ENCODE measurements at regions of chr2 and their contacts with region 1.

Region 1: DNA sequence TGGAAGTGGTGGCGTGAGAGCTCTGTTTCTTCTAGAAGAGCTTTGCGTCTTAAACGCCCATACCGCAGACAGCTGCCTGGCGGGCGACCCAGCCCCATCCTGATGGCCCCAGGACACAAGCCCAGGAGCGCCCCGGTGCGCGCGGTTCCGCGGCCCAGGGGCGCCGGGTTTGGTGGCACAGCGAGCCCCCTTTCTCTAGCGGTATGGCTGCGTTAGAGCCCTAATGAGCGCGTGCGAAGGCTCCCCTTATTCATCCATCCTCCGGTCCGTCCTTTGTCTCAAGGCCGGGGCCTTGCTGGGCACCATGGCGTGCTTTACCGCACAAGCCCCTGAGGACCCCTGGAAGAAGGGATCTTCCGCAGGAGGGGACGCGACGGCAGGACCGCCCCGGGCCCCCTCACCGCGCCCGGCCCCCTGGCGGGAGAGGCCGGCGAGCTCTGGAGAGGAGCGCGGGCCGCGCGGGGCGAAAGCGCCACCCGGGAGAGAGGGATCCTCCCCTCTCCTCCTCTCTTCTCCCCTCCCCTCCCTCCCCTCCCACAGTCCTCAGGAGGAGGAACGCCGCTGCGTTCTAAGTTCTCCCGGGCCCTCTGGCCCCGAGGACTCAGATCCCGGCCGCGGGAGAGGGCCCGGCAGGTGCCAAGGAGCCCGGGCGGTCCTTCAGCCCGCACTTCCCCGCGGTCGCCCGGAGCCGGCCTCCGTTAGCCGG is 626 bp upstream of the SLC1A4 start:
- DNase-seq: peak; percentile 93
- H3K4me3 Mint-ChIP-seq: peak overlapping the region; percentile 77
- H3K27ac Mint-ChIP-seq: peak overlapping the region; percentile 74
- H3K4me1 Mint-ChIP-seq: peaks cover 54% of the 10 kb centered on the region
- H3K27me3 Mint-ChIP-seq: peaks cover 16% of the 10 kb centered on the region

Region 2: GRCh38 chr2:63888490-63889402 is 1099.8 kb before region 1 on chr2:
- intact Hi-C with region 1: no loop called
- DNase-seq: peak; percentile 82
- H3K4me3 Mint-ChIP-seq: no peak overlapping the region
- H3K27ac Mint-ChIP-seq: peak overlapping the region; percentile 31
- H3K4me1 Mint-ChIP-seq: peaks cover 7% of the 10 kb centered on the region
- H3K27me3 Mint-ChIP-seq: no peaks in the 10 kb centered on the region

Region 3: GRCh38 chr2:64036034-64036705 is 952.4 kb before region 1 on chr2:
- intact Hi-C with region 1: loop called (anchors 10 kb)
- DNase-seq: peak; percentile 82
- H3K4me3 Mint-ChIP-seq: peak overlapping the region; percentile 22
- H3K27ac Mint-ChIP-seq: peak overlapping the region; percentile 76
- H3K4me1 Mint-ChIP-seq: peaks cover 42% of the 10 kb centered on the region
- H3K27me3 Mint-ChIP-seq: no peaks in the 10 kb centered on the region

Region 4: GRCh38 chr2:64609227-64609941 is 379.2 kb before region 1 on chr2:
- intact Hi-C with region 1: loop called (anchors 5 kb)
- DNase-seq: peak; percentile 93
- H3K4me3 Mint-ChIP-seq: peak overlapping the region; percentile 76
- H3K27ac Mint-ChIP-seq: peak overlapping the region; percentile 74
- H3K4me1 Mint-ChIP-seq: peaks cover 24% of the 10 kb centered on the region
- H3K27me3 Mint-ChIP-seq: peaks cover 20% of the 10 kb centered on the region

Region 5: DNA sequence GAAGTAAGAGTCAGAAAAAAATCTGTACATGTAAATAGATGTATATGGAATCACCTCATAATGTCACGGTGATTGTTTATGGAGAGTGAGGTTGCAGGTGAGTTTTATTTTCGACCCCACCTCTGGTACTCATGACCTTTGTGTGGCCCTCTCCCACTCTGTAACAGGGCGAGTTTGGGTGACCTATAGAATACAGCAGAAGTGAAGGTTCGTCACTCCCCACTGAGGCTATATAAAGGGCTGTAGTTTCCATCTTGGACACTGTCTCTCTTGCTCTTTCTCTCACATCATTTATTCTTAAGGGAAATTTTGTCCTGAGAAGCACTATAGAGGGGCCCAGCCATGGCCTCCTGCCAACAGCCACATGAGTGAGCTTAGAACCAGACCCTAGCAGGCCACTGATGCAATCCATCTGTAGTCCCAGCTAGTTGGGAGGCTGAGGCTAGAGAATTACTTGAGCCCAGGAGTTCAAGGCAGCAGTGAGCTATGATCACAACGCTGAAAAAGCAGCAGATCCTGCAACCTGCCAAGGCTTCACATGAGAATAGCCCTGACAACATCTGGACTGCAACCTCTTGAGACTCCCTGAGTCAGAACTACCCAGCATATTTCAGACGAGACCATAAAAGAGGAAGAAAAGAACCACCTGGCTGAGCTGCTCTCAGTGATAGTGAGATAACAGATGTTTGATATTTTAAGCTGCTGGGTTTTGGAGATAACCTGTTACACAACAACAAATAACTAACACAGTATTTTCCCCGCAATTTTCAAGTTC is 73.7 kb before region 1 on chr2:
- intact Hi-C with region 1: loop called (anchors 1 kb)
- DNase-seq: no peak
- H3K4me3 Mint-ChIP-seq: no peak overlapping the region
- H3K27ac Mint-ChIP-seq: no peak overlapping the region
- H3K4me1 Mint-ChIP-seq: peaks cover 35% of the 10 kb centered on the region
- H3K27me3 Mint-ChIP-seq: no peaks in the 10 kb centered on the region

Region 6: GRCh38 chr2:65031341-65032018 is 42.9 kb after region 1 on chr2:
- intact Hi-C with region 1: no loop called
- DNase-seq: no peak
- H3K4me3 Mint-ChIP-seq: peak overlapping the region; percentile 2
- H3K27ac Mint-ChIP-seq: peak overlapping the region; percentile 50
- H3K4me1 Mint-ChIP-seq: peaks cover 19% of the 10 kb centered on the region
- H3K27me3 Mint-ChIP-seq: no peaks in the 10 kb centered on the region

Region 7: DNA sequence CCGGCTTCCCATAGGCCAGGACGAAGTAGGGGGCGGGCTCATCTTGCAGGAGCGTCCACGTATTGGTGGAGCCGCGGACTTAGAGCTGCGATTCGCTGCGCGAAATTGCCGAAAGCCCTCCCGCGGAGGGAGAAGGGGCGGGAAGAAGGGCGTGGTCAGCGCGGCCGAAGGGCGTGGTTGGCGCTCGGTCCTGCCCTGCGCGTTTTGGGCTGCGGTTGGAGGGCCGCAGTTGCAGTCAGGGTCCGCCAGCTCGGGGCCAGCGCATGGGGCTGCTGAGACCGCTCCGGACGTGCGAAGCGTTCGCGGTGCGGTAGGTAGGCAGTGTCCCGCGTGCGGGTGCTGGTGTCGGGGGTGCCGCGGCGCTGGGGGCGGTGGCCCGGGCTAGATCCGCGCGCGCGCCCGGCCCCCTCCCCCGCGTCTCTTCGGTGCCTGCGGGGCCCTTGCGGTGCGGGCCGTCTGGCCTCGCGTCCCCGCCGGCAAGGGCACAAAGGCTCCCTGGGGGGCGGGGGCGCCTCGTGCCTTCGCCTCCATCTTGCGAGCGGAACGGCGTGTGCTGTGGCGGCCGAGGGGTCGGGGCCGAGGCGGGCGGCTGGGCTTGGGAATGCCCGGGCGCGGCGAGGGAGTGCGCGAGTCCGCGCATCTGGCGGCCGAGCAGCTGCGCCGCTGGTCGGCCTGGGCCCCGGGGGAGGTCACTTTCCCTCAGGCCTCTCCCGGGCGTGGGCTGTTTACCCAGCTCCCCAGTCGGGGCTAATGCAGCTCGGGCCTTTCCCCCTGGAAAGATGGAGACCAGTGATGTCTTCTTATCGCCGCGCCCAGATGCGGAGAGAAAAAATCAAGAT is 67.9 kb after region 1 on chr2 and contains the start of gene CEP68:
- intact Hi-C with region 1: loop called (anchors 1 kb)
- DNase-seq: peak; percentile 99
- H3K4me3 Mint-ChIP-seq: peak within 1 kb of the TSS; percentile 97
- H3K27ac Mint-ChIP-seq: peak within 1 kb of the TSS; percentile 87
- H3K4me1 Mint-ChIP-seq: peaks cover 50% of the 10 kb centered on the region
- H3K27me3 Mint-ChIP-seq: peaks cover 2% of the 10 kb centered on the region
- total RNA-seq, gene CEP68: 4.4 and 4.9 TPM in 2 replicates

Region 8: DNA sequence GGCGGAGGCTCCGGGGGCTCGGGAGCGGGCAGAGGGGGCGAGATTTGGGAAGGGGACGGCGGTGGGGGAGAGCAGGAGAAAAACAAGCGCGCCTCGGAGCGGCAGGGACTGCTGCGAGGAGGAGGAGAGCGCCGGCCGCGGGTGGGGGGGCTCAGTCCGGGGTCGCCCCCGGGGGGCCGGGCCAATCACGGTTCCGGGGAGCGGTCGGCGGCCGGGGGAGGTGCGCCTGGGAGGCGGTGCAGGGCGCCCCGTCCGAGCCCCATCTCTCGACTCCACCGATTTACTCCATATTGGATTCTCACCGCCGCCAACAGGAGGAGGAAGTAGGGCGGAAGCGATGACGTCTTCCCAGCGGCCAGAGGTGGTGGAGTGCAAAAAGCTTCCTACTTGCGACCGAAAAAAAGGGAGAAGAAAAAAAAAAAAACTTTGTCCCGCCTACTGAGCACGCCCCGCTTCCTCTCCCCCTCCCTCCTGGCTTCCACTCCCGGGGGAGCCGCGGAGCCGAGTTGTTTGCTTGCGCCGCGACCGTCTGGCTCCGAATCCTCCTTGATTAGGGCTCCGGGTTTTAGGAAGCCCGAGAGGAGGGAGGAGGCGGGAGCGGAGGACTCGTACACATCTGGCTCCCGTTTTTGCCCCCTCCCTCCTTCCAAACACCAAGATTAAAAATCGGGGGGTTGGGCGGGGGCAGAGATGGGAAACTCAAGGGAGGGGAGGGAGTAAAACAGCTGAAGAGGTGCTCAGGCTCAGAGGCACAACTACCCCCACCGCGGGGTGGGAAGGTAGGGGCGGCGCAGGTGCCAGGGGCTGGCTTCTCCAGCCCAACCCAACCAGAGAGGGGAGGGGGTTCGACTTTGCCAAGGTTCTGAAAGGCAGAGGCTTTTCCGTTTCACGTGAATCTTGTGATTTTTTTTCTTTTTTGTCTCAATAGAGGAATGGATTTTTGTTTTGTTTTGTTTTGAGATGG is 443.9 kb after region 1 on chr2 and contains the start of gene SPRED2:
- intact Hi-C with region 1: loop called (anchors 5 kb)
- DNase-seq: peak; percentile 93
- H3K4me3 Mint-ChIP-seq: peak within 1 kb of the TSS; percentile 97
- H3K27ac Mint-ChIP-seq: peak within 1 kb of the TSS; percentile 89
- H3K4me1 Mint-ChIP-seq: peaks cover 31% of the 10 kb centered on the region
- H3K27me3 Mint-ChIP-seq: peaks cover 36% of the 10 kb centered on the region
- total RNA-seq, gene SPRED2: 7.7 and 9.2 TPM in 2 replicates

Measured in activated CD4-positive, alpha-beta T cell treated with anti-CD3 and anti-CD28 coated beads, Interleukin-2, amount 10 ng/mL, durations not matched to agents 24 days and 14 days (primary cell).